BJ (cell line): ENCODE measurements at regions of chr7 and their contacts with region 1.

Region 1: DNA sequence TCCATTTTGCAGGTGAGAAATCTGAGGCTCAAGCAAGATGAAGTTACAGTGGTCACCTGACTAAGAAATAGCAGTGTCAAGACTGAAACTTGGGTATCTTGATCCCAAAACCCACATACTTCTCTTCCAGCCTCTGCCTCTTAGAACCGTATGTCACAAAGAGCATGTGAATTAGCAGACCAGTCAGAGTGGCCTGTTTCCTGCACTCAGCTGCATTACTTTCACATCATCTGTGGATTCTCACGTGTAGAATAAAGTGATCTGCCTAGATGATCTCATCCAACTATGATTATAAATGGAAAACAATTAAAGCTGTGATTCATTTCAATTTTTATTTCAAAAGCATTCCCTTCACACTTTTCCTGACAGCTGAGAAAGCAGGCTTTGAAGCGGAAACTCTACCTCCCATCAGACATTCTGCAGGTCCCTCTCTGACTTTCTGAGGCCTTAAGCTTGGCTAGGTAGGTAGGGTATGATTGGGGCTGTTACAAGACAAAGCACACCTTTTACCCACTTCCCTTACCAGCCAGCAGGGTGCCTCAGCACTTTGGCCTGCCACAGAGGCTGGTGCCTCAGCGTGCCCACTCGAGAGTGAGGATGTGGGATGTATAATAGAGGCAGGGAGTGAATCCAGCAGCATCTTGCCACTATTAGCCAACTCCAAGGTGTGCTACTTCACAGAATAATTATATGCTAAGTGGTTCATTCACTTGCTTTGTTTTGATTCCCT is 70.2 kb upstream of the PDE1C start:
- DNase-seq: no peak
- H3K4me3 ChIP-seq: no peak overlapping the region
- H3K27me3 ChIP-seq: no peaks in the 10 kb centered on the region
- CTCF ChIP-seq: no peak

Region 2: GRCh38 chr7:32126843-32127242 is 13.5 kb before region 1 on chr7:
- CTCF ChIA-PET with region 1: interaction called, 10 read pairs
- POLR2A ChIA-PET with region 1: no interaction called
- DNase-seq: no peak
- H3K4me3 ChIP-seq: no peak overlapping the region
- H3K27me3 ChIP-seq: no peaks in the 10 kb centered on the region
- CTCF ChIP-seq: no peak

Region 3: DNA sequence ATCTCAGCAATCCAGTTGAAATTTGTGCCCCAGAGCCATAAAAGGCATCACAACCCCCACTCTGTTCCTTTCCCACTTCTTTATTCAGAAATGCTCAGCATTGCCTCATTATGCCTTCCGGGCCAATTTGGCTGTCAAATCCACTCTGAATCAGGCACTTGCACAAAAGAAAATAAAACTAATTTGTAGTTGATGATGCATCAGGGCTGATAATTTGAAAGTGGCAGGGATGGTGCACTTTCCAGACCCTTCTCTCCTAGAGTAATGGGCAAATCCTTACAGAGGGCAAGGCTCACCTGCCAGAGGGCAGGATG is 77.7 kb after region 1 on chr7:
- CTCF ChIA-PET with region 1: no interaction called
- POLR2A ChIA-PET with region 1: no interaction called
- DNase-seq: no peak
- H3K4me3 ChIP-seq: no peak overlapping the region
- H3K27me3 ChIP-seq: peaks cover 6% of the 10 kb centered on the region
- CTCF ChIP-seq: no peak

Region 4: DNA sequence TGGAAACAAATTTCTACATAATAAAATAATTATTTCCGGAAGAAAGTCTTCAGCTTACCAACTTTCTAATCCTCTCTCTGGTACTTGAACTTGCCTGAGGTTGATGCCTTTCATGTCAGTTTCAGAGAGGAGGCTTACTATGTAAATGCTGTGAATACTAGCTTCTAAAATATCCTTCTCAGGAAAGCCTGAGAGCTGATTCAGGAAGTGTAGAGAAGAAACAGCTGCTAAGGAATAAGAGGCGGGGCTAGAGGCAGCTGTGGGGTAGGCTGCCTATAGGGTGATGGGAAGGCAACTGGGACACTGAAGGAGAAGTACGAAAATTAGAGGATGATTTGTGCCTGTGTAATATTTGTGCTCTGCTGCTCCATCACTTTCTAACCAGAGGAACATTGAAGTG is 424.2 kb after region 1 on chr7:
- CTCF ChIA-PET with region 1: no interaction called
- POLR2A ChIA-PET with region 1: no interaction called
- DNase-seq: no peak
- H3K4me3 ChIP-seq: no peak overlapping the region
- H3K27me3 ChIP-seq: no peaks in the 10 kb centered on the region
- CTCF ChIP-seq: no peak